PC-3 (cell line): ENCODE measurements at regions of chr7 and their contacts with region 1.

Region 1: DNA sequence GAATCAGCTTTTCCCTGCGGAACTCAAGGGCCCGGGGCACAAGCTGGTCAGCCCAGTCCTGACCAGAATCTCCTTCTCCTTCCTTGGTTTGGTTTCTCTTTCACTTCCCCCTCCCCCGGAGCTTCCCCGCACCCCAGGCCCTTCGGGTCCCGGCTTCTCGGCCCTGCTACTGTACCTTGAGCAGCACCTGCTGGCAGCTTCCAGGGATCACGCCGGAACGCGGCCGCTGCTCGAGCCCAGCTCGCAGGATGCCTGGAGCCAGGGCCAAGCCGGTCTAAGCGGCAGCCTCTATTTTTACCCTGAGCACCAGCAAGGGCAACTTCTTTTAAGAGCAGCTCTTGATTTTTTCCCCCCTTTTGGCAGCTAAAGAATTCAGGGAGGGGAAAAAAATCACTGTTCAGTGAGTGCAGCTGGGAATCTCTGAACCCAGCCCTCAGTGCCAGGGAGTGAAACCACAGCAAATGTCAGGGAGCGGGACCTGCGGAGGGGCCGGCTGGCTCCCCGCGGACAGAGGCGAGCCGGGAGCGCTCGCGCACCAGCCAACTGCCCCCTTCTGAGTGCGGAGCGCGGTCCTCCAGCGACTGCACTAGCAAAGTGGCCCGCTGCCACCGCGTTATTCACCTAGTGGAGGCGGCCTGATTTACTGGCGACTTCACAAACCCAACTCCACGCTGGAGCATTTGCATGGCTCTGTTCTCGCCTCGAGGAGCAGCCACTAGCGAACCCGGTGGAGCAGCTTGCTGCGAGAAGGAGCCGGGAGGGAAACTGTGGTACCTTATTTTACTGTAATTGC is 2.4 kb upstream of the INHBA start:
- DNase-seq: peak; percentile 94
- ATAC-seq: peak; percentile 70
- H3K4me3 ChIP-seq: peak overlapping the region; percentile 68
- H3K27ac ChIP-seq: peak overlapping the region; percentile 94
- H3K4me1 ChIP-seq: peaks cover 61% of the 10 kb centered on the region
- H3K27me3 ChIP-seq: no peaks in the 10 kb centered on the region
- CTCF ChIP-seq: peak; percentile 86

Region 2: GRCh38 chr7:40329601-40330153 is 1375.6 kb before region 1 on chr7:
- CTCF ChIA-PET with region 1: interaction called, 3 read pairs
- POLR2A ChIA-PET with region 1: interaction called, 7 read pairs
- intact Hi-C with region 1: loop called (anchors 1 kb)
- DNase-seq: peak; percentile 75
- ATAC-seq: peak; percentile 62
- H3K4me3 ChIP-seq: no peak overlapping the region
- H3K27ac ChIP-seq: no peak overlapping the region
- H3K4me1 ChIP-seq: no peaks in the 10 kb centered on the region
- H3K27me3 ChIP-seq: no peaks in the 10 kb centered on the region
- CTCF ChIP-seq: peak; percentile 77

Region 3: GRCh38 chr7:40763318-40764287 is 941.7 kb before region 1 on chr7:
- CTCF ChIA-PET with region 1: interaction called, 4 read pairs
- POLR2A ChIA-PET with region 1: no interaction called
- intact Hi-C with region 1: loop called (anchors 2 kb)
- DNase-seq: peak; percentile 33
- ATAC-seq: peak; percentile 71
- H3K4me3 ChIP-seq: no peak overlapping the region
- H3K27ac ChIP-seq: no peak overlapping the region
- H3K4me1 ChIP-seq: no peaks in the 10 kb centered on the region
- H3K27me3 ChIP-seq: no peaks in the 10 kb centered on the region
- CTCF ChIP-seq: peak; percentile 27

Region 4: GRCh38 chr7:40833888-40834234 is 871.4 kb before region 1 on chr7:
- CTCF ChIA-PET with region 1: no interaction called
- POLR2A ChIA-PET with region 1: no interaction called
- intact Hi-C with region 1: loop called (anchors 5 kb)
- DNase-seq: peak; percentile 42
- ATAC-seq: peak; percentile 58; the same call in 1 of the 2 replicates
- H3K4me3 ChIP-seq: no peak overlapping the region
- H3K27ac ChIP-seq: peak overlapping the region; percentile 9; the same call in 1 of the 2 replicates
- H3K4me1 ChIP-seq: peaks cover 18% of the 10 kb centered on the region
- H3K27me3 ChIP-seq: no peaks in the 10 kb centered on the region
- CTCF ChIP-seq: peak; percentile 59

Region 5: DNA sequence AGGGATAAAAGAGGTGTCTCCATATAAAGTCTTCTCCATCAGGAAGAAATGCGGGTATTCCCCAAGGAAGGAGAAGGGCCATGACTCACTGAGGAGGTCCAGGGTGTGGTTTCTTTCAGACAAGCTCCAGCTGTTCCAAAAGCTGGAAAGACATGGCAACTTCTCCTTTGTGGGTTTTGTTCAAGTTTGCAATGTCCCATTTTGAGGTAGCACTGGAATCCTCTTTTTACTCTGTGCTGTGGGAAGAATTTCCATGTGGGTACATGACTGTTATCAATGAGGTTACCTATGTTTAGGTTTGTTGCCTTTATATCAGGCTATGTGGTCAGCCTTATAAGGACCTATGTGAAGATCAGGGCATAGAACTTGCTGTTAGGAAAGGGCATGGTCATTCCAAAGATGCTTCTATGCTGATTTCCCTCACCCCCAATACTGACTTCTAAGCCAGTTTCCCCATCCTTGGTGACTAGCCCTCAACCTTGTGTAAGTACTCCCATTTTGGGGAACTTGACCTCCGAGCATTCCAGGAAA is 699.9 kb before region 1 on chr7:
- CTCF ChIA-PET with region 1: interaction called, 12 read pairs
- POLR2A ChIA-PET with region 1: no interaction called
- intact Hi-C with region 1: loop called (anchors 2 kb)
- DNase-seq: peak; percentile 81
- ATAC-seq: peak; percentile 43
- H3K4me3 ChIP-seq: no peak overlapping the region
- H3K27ac ChIP-seq: peak overlapping the region; percentile 84
- H3K4me1 ChIP-seq: peaks cover 54% of the 10 kb centered on the region
- H3K27me3 ChIP-seq: no peaks in the 10 kb centered on the region
- CTCF ChIP-seq: no peak

Region 6: DNA sequence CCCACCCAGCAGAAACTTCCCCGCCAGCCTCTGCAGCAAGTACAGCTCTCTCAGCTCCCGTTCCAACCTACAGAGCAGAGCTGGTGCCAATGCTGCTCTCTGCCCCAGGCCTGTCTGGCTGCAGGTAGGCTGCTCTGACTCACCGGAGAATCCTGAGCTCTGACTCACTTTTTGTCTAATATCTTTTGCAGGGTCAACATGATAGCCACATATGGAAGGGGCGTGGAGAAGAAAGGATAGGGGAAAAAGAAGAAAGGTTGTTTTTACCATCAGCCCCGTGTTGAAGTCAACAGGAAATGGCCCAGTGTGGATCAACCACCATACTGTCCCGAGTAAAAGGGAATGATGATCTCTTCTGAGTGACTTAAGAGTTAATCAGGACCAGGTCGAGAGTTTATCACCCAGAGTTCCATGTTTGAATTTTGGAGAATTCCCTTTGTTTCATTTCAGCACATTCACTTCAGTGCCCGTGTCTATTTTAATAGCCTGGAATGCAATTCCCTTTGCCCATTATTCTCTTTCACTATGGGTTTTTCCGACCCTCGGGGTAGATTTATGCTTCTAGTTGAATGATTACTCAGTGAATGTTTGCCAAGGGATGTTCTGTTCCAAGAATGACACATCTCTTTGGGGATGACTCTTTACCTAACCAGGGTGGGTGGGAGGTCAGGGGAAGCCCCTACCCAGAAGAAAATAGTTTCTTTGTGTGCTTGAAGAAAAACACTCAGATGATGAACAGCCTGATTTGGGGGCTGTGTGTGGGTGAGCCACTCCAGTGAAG is 597.4 kb before region 1 on chr7:
- CTCF ChIA-PET with region 1: no interaction called
- POLR2A ChIA-PET with region 1: interaction called, 4 read pairs
- intact Hi-C with region 1: loop called (anchors 2 kb)
- DNase-seq: peak; percentile 98
- ATAC-seq: peak; percentile 92
- H3K4me3 ChIP-seq: peak overlapping the region; percentile 48; the same call in 1 of the 2 replicates
- H3K27ac ChIP-seq: peak overlapping the region; percentile 100
- H3K4me1 ChIP-seq: peaks cover 51% of the 10 kb centered on the region
- H3K27me3 ChIP-seq: no peaks in the 10 kb centered on the region
- CTCF ChIP-seq: no peak

Region 7: GRCh38 chr7:41189866-41190265 is 515.4 kb before region 1 on chr7:
- CTCF ChIA-PET with region 1: interaction called, 5 read pairs
- POLR2A ChIA-PET with region 1: no interaction called
- intact Hi-C with region 1: loop called (anchors 2 kb)
- DNase-seq: peak; percentile 96
- ATAC-seq: peak; percentile 69
- H3K4me3 ChIP-seq: no peak overlapping the region
- H3K27ac ChIP-seq: peak overlapping the region; percentile 99
- H3K4me1 ChIP-seq: peaks cover 62% of the 10 kb centered on the region
- H3K27me3 ChIP-seq: no peaks in the 10 kb centered on the region
- CTCF ChIP-seq: no peak

Region 8: DNA sequence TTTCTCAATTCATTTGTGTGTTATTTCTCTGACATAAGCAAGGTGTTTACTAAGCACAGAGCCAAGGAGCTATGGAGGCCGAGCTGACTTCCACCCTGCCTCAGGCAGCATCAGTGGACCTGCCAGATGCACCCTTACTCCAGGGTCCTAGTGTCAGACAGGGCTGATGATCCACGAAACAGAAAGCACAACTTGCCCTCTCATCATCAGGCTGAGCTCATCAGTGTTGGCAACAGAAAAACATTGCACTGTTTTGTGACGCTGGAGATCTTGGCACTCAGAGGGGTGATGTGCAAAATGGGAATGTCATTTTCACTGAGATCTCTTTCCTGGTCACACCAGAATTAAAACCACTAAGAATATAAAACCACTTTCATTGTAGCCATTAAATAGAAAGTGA is 329.9 kb after region 1 on chr7:
- CTCF ChIA-PET with region 1: no interaction called
- POLR2A ChIA-PET with region 1: no interaction called
- intact Hi-C with region 1: no loop called
- DNase-seq: no peak
- ATAC-seq: no peak
- H3K4me3 ChIP-seq: no peak overlapping the region
- H3K27ac ChIP-seq: no peak overlapping the region
- H3K4me1 ChIP-seq: no peaks in the 10 kb centered on the region
- H3K27me3 ChIP-seq: no peaks in the 10 kb centered on the region
- CTCF ChIP-seq: no peak